HEK293 (cell line): ENCODE measurements at regions of chr15 and their contacts with region 1.

Region 1: GRCh38 chr15:92226014-92226612 is 167.6 kb upstream of the ST8SIA2 start:
- H3K4me3 ChIP-seq: no peak overlapping the region
- H3K27ac ChIP-seq: no peak overlapping the region
- H3K4me1 ChIP-seq: no peaks in the 10 kb centered on the region
- CTCF ChIP-seq: no peak

Region 2: GRCh38 chr15:92091155-92091734 is 134.9 kb before region 1 on chr15:
- CTCF ChIA-PET with region 1: interaction called, 18 read pairs
- POLR2A ChIA-PET with region 1: no interaction called
- H3K4me3 ChIP-seq: no peak overlapping the region
- H3K27ac ChIP-seq: no peak overlapping the region
- H3K4me1 ChIP-seq: no peaks in the 10 kb centered on the region
- CTCF ChIP-seq: peak; percentile 62